ENCODE measurements at regions of chr1 and their contacts with region 1.

Region 1: GRCh38 chr1:16960560-16961296 is 19.7 kb downstream of the MFAP2 start:
- DNase-seq: peak; percentile 97
- ATAC-seq: peak; percentile 89
- H3K4me3 Mint-ChIP-seq: peak overlapping the region; percentile 55
- H3K27ac Mint-ChIP-seq: peak overlapping the region; percentile 3; the same call in 1 of the 2 replicates
- H3K4me1 Mint-ChIP-seq: peaks cover 4% of the 10 kb centered on the region
- H3K27me3 Mint-ChIP-seq: no peaks in the 10 kb centered on the region
- CTCF ChIP-seq: peak; percentile 33; the same call in 1 of the 2 replicates

Region 2: GRCh38 chr1:16888860-16889816 is 71.6 kb before region 1 on chr1:
- CTCF ChIA-PET with region 1: no interaction called
- POLR2A ChIA-PET with region 1: no interaction called
- DNase-seq: peak; percentile 87
- ATAC-seq: peak; percentile 96
- H3K4me3 Mint-ChIP-seq: peak overlapping the region; percentile 85
- H3K27ac Mint-ChIP-seq: peak overlapping the region; percentile 97
- H3K4me1 Mint-ChIP-seq: peaks cover 23% of the 10 kb centered on the region
- H3K27me3 Mint-ChIP-seq: peaks cover 5% of the 10 kb centered on the region; the same call in 1 of the 2 replicates
- CTCF ChIP-seq: no peak

Region 3: DNA sequence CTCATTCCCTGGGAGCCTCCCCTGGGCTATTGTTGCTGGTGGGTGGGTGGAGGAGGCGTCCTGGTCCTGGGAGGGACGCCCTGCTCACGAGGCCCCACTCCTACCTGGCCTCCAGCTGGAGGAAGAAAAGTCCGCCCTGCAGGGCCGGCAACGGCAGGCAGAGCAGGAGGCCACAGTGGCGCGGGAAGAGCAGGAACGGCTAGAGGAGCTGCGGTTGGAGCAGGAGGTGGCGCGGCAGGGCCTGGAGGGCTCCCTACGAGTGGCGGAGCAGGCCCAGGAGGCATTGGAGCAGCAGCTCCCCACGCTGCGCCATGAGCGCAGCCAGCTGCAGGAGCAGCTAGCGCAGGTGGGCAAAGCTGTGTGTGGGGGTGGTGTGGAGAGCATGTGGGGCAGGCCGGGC is 14.1 kb before region 1 on chr1:
- CTCF ChIA-PET with region 1: interaction called, 25 read pairs
- POLR2A ChIA-PET with region 1: interaction called, 3 read pairs
- DNase-seq: no peak
- ATAC-seq: no peak
- H3K4me3 Mint-ChIP-seq: no peak overlapping the region
- H3K27ac Mint-ChIP-seq: no peak overlapping the region
- H3K4me1 Mint-ChIP-seq: no peaks in the 10 kb centered on the region
- H3K27me3 Mint-ChIP-seq: no peaks in the 10 kb centered on the region
- CTCF ChIP-seq: no peak

Region 4: GRCh38 chr1:16978567-16979474 is 18.1 kb after region 1 on chr1:
- CTCF ChIA-PET with region 1: interaction called, 34 read pairs
- POLR2A ChIA-PET with region 1: interaction called, 3 read pairs
- DNase-seq: no peak
- ATAC-seq: no peak
- H3K4me3 Mint-ChIP-seq: peak overlapping the region; percentile 70
- H3K27ac Mint-ChIP-seq: no peak overlapping the region
- H3K4me1 Mint-ChIP-seq: peaks cover 42% of the 10 kb centered on the region
- H3K27me3 Mint-ChIP-seq: no peaks in the 10 kb centered on the region; the same call in 1 of the 2 replicates
- CTCF ChIP-seq: no peak

Region 5: DNA sequence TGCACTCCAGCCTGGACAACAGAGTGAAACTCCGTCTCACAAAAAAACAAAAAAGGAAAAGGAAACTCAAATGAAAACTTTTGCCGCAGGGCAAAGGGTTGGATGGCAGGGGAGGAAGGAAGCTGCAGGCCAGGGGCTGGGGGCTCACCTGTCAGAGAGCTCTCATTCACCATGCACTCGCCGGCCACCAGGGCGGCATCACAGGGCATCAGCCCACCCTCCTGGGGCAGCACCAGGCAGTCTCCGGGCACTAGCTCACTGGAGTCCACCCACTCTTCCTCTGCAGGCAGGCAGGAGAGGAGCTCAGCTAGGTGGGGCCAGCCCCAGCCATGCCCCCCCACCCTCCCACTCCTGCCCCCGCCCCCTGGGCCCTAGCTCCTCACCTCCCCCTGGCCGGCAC is 39.1 kb after region 1 on chr1:
- CTCF ChIA-PET with region 1: interaction called, 11 read pairs
- POLR2A ChIA-PET with region 1: no interaction called
- DNase-seq: no peak
- ATAC-seq: peak; percentile 51
- H3K4me3 Mint-ChIP-seq: no peak overlapping the region
- H3K27ac Mint-ChIP-seq: no peak overlapping the region
- H3K4me1 Mint-ChIP-seq: no peaks in the 10 kb centered on the region
- H3K27me3 Mint-ChIP-seq: no peaks in the 10 kb centered on the region
- CTCF ChIP-seq: no peak

Region 6: DNA sequence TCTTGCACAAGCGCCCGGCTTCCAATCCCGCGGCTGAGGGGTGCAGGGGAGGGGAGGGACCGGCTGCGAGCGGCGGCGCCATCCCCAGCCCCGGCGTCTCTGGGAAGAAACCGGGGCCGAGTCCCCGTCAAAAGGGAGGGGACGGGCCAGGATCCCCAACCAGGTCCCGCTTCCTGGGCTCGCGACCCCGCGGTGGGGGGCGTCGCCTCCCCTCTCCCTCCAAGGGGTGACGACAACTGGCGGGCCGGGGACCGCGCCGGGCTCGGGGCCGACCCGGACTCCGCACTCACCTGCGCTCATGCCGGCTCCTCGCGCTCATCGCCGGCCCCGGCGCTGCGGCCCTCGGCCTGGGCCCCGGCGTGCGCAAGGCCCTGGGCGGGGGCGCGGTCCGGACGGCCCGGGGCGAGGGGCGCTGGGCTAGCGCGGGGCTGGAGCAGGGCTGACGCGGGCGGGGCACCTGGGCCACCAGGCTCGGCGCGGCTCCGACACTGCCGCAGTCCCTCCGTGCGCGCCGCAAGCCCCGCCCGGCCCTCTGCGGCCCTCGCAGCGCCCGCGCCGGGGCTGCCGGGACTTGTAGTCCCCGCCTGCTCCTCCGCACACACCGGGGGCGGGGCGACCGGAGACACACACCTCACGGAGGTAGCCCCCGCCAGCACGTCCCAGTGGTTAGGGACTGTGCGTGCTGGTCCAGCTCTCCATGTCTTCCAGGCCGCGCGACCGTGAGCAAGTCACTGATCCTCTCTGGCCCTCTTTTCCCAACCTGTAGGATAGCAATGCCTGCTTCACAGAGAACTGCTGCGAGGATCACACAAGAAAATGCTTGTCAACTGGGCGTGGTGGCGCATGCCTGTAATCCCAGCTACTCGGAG is 50.9 kb after region 1 on chr1 and contains the start of gene ATP13A2:
- CTCF ChIA-PET with region 1: interaction called, 10 read pairs
- POLR2A ChIA-PET with region 1: interaction called, 3 read pairs
- DNase-seq: peak; percentile 94
- ATAC-seq: peak; percentile 85
- H3K4me3 Mint-ChIP-seq: peak within 1 kb of the TSS; percentile 85
- H3K27ac Mint-ChIP-seq: peak within 1 kb of the TSS; percentile 84
- H3K4me1 Mint-ChIP-seq: peaks cover 73% of the 10 kb centered on the region
- H3K27me3 Mint-ChIP-seq: no peaks in the 10 kb centered on the region
- CTCF ChIP-seq: no peak
- total RNA-seq, gene ATP13A2: 84.8 to 95.9 TPM (median 93.1 TPM) in 3 replicates

Measured in WTC11 (cell line).